HepG2 (cell line): ENCODE measurements at regions of chr12 and their contacts with region 1.

Region 1: DNA sequence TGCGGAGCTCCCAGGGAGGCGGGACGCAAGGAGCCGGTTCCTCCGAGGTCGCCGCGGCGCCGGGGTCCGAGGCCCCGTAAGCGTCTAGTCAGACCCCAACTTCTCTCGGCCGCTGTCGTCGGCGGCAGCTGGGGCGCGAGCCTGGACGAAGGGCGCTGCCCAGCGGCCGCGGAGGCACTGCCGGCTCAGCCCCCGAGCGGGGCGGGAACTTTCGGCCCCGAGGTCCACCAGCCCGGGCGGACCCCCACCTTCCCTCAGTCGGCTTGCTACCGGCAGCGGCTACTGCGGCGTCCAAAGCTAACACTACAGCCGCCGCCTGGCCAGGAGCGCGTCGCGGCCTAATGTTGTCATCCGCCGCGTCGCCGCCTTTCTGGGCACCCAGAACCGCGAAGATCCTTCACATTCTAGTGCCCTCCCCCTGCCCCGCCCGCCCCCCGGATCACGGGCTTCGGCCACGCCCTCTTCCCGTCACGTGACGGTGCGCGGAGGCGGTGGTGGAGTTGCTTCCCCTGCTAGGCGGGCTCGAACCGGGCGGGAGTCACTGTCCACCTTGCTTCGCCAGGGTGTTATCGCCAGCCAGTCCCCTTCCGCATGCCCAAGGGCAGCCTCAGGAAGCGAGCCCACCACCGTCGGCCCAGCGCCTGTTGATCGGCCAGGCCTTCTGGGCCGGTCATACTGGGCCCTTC is at the start of gene OSBPL8:
- DNase-seq: peak; percentile 89
- ATAC-seq: peak; percentile 94
- H3K4me3 ChIP-seq: peak within 1 kb of the TSS; percentile 82 to 100 (median 96)
- H3K27ac ChIP-seq: peak within 1 kb of the TSS; percentile 94
- H3K4me1 ChIP-seq: peaks cover 24% of the 10 kb centered on the region
- H3K27me3 ChIP-seq: no peaks in the 10 kb centered on the region; a peak in 1 of 5 replicates
- CTCF ChIP-seq: peak; percentile 63
- EP300 ChIP-seq: no peak
- POLR2A ChIP-seq: peak; percentile 94 to 99
- RAD21 ChIP-seq: peak; percentile 68
- total RNA-seq, gene OSBPL8: 33.9 and 63.9 TPM in 2 replicates

Region 2: GRCh38 chr12:76548222-76548837 is 11.2 kb before region 1 on chr12:
- CTCF ChIA-PET with region 1: no interaction called
- POLR2A ChIA-PET with region 1: interaction called, 12 read pairs
- in situ Hi-C with region 1: no loop called
- intact Hi-C with region 1: no loop called
- DNase-seq: no peak
- ATAC-seq: peak; percentile 79
- H3K4me3 ChIP-seq: no peak overlapping the region
- H3K27ac ChIP-seq: no peak overlapping the region
- H3K4me1 ChIP-seq: peaks cover 24% of the 10 kb centered on the region
- H3K27me3 ChIP-seq: no peaks in the 10 kb centered on the region
- CTCF ChIP-seq: no peak
- EP300 ChIP-seq: no peak
- POLR2A ChIP-seq: no peak
- RAD21 ChIP-seq: no peak

Region 3: GRCh38 chr12:76763743-76764675 is 204.5 kb after region 1 on chr12 and contains the start of gene ZDHHC17:
- CTCF ChIA-PET with region 1: no interaction called
- POLR2A ChIA-PET with region 1: no interaction called
- in situ Hi-C with region 1: no loop called
- intact Hi-C with region 1: loop called (anchors 5 kb)
- DNase-seq: peak; percentile 87
- ATAC-seq: peak; percentile 95
- H3K4me3 ChIP-seq: peak within 1 kb of the TSS; percentile 74 to 90 (median 79)
- H3K27ac ChIP-seq: peak within 1 kb of the TSS; percentile 90
- H3K4me1 ChIP-seq: peaks cover 45% of the 10 kb centered on the region
- H3K27me3 ChIP-seq: no peaks in the 10 kb centered on the region; a peak in 1 of 5 replicates
- CTCF ChIP-seq: peak; percentile 6; the same call in 1 of the 2 replicates
- EP300 ChIP-seq: no peak
- POLR2A ChIP-seq: peak; percentile 86 to 90
- RAD21 ChIP-seq: peak; percentile 18; the same call in 1 of the 2 replicates
- total RNA-seq, gene ZDHHC17: 21.2 and 36.7 TPM in 2 replicates